Activated CD8-positive, alpha-beta T cell treated with anti-CD3 and anti-CD28 coated beads for 36 hours (primary cell): ENCODE measurements at regions of chr21 and their contacts with region 1.

Region 1: DNA sequence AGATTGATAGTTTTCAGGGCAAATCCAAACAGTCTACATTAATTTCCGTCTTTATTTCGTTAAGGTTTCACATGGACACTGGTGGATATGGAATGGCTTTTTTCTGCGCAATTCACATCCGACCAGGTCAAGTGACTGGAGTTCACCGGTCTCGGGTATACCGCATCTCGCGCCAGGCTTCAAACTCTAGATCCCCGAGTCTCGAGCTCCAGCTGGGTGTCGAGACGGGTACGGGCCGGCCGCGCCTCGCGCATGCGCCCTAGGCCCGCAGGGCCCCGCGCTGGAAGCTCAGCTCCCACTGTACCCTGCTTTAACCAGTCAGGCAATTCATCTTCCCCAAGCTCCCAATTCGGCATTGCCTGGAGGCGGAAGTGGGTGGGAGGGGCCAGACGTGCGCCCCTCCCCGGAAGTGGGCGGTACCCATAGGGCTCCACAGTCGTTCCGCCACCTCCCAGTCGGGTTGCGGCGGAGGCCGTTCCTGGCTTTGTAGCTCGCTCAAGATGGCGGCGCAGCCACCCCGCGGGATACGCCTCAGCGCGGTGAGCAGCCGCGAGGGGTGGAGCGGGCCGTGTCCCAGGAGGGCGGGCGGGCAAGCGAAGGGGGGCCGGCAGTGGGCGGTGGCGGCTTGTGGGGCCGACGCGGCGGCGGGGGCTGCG is at the start of gene MORC3:
- DNase-seq: peak; percentile 98
- ATAC-seq: peak; percentile 92
- H3K4me3 Mint-ChIP-seq: peak within 1 kb of the TSS; percentile 94
- H3K27ac Mint-ChIP-seq: peak within 1 kb of the TSS; percentile 97
- H3K4me1 Mint-ChIP-seq: peaks cover 29% of the 10 kb centered on the region
- H3K27me3 Mint-ChIP-seq: no peaks in the 10 kb centered on the region
- CTCF ChIP-seq: no peak
- total RNA-seq, gene MORC3: 20.4 to 20.7 TPM

Region 2: DNA sequence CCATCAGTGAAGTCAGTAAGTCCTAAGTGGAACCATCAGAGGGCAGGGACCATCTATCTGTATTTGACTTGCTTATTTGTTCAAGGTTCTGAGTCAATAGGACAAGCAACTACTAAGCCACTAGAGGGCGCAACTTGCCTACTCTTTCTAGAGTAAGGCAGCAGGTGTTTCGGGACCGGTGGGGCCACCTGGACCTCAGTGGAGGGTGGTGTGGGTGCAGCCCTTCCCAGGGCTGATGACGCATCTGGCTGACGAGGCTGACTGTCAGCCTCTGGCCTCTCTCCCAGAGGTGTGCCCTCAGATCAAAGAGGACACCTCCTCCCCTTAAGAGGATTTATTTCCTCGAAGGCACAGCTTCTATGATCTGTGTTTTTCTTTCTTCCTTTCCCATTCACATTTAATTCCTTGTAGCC is 178.4 kb before region 1 on chr21:
- CTCF ChIA-PET with region 1: interaction called, 15 read pairs
- POLR2A ChIA-PET with region 1: interaction called, 4 read pairs
- intact Hi-C with region 1: no loop called
- DNase-seq: peak; percentile 94
- ATAC-seq: peak; percentile 96
- H3K4me3 Mint-ChIP-seq: no peak overlapping the region
- H3K27ac Mint-ChIP-seq: no peak overlapping the region
- H3K4me1 Mint-ChIP-seq: peaks cover 15% of the 10 kb centered on the region
- H3K27me3 Mint-ChIP-seq: no peaks in the 10 kb centered on the region
- CTCF ChIP-seq: peak; percentile 95

Region 3: DNA sequence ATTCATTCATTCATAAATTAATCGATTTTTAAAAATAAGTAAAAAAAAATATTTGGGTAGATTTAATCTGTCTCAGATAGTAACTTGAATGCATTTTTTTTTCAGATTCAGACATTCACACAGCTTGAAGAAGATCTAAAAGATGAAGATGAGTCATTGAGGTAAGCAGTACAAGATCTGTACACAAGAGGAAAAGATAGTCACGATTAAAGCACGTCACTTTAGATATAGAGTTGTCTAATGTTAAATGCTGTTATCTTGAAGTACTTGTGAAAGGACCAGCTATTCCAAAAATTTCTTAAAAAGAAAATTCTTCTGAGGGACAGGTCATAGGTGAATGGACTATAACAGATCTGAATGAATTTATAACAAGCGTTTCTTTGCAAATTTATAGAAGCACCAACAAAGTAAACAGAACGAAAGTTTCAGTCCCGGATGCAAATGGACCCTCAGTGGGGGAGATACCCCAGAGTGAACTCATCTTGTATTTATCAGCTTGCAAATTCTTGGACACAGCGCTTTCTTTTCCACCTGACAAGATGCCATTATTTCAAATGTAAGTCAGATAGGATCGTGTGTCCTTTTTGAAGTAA is 31.1 kb before region 1 on chr21:
- CTCF ChIA-PET with region 1: interaction called, 6 read pairs
- POLR2A ChIA-PET with region 1: interaction called, 20 read pairs
- intact Hi-C with region 1: no loop called
- DNase-seq: no peak
- ATAC-seq: peak; percentile 77
- H3K4me3 Mint-ChIP-seq: no peak overlapping the region
- H3K27ac Mint-ChIP-seq: peak overlapping the region; percentile 68
- H3K4me1 Mint-ChIP-seq: peaks cover 17% of the 10 kb centered on the region
- H3K27me3 Mint-ChIP-seq: no peaks in the 10 kb centered on the region
- CTCF ChIP-seq: no peak

Region 4: DNA sequence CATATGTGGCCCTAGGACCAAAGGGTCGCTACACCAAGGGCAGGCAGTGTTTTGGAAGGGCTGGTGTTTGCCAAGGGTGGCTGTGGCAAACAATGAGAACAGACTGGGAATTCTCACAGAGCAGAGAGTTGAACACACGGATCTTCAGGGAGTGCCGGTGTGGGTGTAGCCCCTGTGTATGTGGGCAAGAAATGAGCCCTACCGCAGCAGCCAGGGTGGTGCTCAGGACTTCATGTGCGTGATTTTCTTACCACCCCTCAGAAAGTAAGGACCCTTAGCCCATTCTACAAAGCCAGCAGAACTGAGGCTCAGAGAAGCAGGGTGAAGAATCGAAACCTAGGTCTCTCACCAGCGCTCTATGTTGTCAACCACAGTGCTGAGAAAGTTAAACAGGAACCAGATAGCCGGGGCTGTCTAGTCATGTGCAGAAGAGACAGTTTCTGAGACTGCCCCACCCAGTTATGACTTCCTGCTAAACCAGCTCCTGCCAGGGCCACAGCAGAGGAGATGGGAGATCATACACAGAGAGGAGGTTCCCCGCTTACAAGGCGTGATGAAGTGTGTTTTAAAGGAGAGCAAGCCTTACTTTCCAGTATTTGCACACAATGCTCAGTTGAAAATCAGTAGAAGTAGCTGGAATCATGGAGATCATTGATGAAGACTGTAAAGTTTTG is 21.8 kb before region 1 on chr21:
- CTCF ChIA-PET with region 1: interaction called, 6 read pairs
- POLR2A ChIA-PET with region 1: interaction called, 20 read pairs
- intact Hi-C with region 1: no loop called
- DNase-seq: peak; percentile 78
- ATAC-seq: peak; percentile 99
- H3K4me3 Mint-ChIP-seq: peak overlapping the region; percentile 49
- H3K27ac Mint-ChIP-seq: peak overlapping the region; percentile 89
- H3K4me1 Mint-ChIP-seq: peaks cover 23% of the 10 kb centered on the region
- H3K27me3 Mint-ChIP-seq: no peaks in the 10 kb centered on the region
- CTCF ChIP-seq: no peak

Region 5: GRCh38 chr21:36330904-36331303 is 11.0 kb after region 1 on chr21:
- CTCF ChIA-PET with region 1: interaction called, 17 read pairs
- POLR2A ChIA-PET with region 1: interaction called, 6 read pairs
- intact Hi-C with region 1: no loop called
- DNase-seq: peak; percentile 65
- ATAC-seq: peak; percentile 90
- H3K4me3 Mint-ChIP-seq: no peak overlapping the region
- H3K27ac Mint-ChIP-seq: peak overlapping the region; percentile 26
- H3K4me1 Mint-ChIP-seq: peaks cover 39% of the 10 kb centered on the region
- H3K27me3 Mint-ChIP-seq: no peaks in the 10 kb centered on the region
- CTCF ChIP-seq: peak; percentile 69